GM18951 (cell line): ENCODE measurements at regions of chr6 and their contacts with region 1.

Region 1: DNA sequence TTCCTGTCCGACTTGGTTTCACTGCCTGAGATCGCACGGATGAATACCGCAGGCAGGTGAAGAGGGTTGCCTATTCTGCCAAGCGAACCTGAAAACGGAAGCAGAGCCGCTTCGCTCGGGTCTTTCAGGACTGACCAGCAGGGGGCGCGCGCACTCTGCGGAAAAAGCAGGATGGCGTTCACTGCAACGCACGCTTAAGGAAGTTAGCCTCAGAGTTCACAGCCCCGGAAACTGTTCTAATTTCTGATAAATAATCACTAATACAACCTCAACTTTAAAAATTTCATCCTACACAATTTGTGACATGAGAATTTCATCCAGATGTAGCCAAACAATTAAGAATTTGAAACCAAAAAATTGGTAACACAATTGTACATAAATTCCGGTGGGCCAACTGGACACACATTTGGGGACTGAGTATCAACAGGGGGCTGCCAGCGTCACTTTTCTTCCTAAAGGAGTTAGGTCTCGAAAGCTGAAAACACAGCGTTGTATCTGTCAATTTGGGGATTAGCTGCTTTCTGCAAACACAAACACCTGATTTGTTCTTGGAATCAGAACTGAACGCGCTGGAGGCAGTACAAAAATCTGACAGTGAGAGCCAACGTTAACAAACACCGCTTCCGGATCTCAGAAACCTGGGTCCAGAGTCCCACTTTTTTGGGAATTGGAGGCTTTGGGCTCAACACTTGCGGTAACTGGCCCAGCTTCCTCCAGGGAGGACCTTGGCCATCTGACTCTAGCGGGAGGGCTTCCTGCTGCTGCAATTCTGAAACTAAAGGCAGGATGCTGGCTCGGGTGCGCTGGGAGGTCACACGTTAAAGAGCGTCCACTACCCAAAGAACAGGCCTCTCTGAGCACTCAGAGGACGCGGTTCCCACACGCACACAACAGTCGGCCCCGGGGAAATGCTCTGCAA is 8.8 kb downstream of the PXDC1 start:
- POLR2A ChIP-seq: no peak

Region 2: GRCh38 chr6:3414327-3415075 is 328.2 kb before region 1 on chr6:
- in situ Hi-C with region 1: no loop called
- POLR2A ChIP-seq: no peak

Region 3: DNA sequence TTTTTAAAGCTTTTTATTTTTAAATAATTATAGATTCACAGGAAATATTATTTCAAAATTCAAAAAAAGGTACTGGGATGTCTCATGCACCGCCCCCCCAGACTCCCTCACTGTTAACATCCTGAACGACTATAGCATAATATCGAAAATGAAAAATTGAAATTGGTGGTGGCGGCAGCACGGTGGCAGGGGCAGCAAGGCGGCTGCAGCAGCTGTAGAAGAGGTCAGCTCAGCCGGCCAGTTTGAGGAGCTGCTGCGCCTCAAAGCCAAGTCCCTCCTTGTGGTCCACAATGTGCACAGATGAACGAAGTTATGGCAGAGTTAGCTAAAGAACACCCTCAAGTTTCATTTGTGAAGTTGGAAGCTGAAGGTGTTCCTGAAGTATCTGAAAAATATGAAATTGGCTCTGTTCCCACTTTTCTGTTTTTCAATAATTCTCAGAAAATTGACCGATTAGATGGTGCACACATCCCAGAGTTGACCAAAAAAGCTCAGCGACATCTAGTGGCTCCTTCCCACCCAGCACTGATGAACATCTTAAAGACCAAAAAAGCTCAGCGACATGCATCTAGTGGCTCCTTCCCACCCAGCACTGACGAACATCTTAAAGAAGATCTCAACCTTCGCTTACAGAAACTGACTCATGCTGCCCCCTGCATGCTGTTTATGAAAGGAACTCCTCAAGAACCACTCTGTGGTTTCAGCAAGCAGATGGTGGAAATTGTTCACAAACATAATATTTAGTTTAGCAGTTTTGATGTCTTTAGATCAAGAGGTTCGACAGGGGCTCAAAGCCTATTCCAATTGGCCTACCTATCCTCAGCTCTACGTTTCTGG is 235.4 kb after region 1 on chr6:
- in situ Hi-C with region 1: loop called (anchors 10 kb)
- POLR2A ChIP-seq: no peak

Region 4: GRCh38 chr6:4155848-4156466 is 413.3 kb after region 1 on chr6:
- in situ Hi-C with region 1: loop called (anchors 25 kb)
- POLR2A ChIP-seq: no peak